ENCODE measurements at regions of chr17 and their contacts with region 1.

Region 1: DNA sequence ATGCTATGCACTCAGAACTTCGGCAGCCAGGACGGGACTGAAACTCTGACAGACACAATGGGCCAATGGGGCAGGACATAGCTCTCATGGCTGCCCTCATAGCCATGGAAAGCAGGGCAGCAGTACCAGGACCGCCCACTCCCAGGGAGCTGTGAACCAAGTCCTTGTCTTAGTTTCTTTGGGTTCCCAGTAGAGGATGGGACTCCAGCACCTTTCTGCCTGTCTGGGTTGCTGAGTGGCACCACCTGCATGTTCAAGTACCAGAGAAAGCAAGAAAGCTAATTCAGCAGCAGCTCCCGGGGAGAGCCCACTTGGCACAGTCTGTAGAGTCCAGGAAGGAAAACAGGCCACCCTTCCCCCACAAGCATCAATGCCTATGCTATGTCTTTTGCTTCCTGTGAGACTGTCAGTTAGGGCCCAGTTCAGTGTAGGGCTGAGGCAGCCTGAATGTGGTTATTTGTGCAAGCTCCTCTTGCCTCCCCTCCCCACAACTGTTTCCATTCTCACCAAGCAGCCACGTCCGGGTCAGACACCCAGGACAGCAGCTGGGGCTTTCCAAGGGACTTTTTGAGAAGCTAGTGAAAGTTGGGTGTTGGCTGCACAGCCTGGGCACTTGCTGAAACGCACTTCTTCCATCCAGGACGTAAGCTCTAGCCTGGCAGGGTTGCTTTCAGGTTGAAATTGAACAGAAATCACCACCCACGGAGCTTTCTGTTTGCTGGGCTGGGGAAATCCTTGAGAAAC is 7.8 kb downstream of the SUPT4H1 start:
- DNase-seq: peak; percentile 92
- H3K4me3 Mint-ChIP-seq: peak overlapping the region; percentile 98
- H3K27ac Mint-ChIP-seq: peak overlapping the region; percentile 100
- H3K4me1 Mint-ChIP-seq: peaks cover 85% of the 10 kb centered on the region
- H3K27me3 Mint-ChIP-seq: no peaks in the 10 kb centered on the region

Region 2: GRCh38 chr17:58303971-58304725 is 40.1 kb before region 1 on chr17:
- CTCF ChIA-PET with region 1: interaction called, 16 read pairs
- POLR2A ChIA-PET with region 1: interaction called, 1,460 read pairs
- DNase-seq: peak; percentile 69
- H3K4me3 Mint-ChIP-seq: no peak overlapping the region
- H3K27ac Mint-ChIP-seq: no peak overlapping the region
- H3K4me1 Mint-ChIP-seq: no peaks in the 10 kb centered on the region
- H3K27me3 Mint-ChIP-seq: peaks cover 4% of the 10 kb centered on the region

Region 3: GRCh38 chr17:58329035-58329809 is 15.0 kb before region 1 on chr17:
- CTCF ChIA-PET with region 1: interaction called, 41 read pairs
- POLR2A ChIA-PET with region 1: interaction called, 1,460 read pairs
- DNase-seq: peak; percentile 85
- H3K4me3 Mint-ChIP-seq: peak overlapping the region; percentile 98
- H3K27ac Mint-ChIP-seq: peak overlapping the region; percentile 99
- H3K4me1 Mint-ChIP-seq: peaks cover 37% of the 10 kb centered on the region
- H3K27me3 Mint-ChIP-seq: peaks cover 2% of the 10 kb centered on the region

Region 4: DNA sequence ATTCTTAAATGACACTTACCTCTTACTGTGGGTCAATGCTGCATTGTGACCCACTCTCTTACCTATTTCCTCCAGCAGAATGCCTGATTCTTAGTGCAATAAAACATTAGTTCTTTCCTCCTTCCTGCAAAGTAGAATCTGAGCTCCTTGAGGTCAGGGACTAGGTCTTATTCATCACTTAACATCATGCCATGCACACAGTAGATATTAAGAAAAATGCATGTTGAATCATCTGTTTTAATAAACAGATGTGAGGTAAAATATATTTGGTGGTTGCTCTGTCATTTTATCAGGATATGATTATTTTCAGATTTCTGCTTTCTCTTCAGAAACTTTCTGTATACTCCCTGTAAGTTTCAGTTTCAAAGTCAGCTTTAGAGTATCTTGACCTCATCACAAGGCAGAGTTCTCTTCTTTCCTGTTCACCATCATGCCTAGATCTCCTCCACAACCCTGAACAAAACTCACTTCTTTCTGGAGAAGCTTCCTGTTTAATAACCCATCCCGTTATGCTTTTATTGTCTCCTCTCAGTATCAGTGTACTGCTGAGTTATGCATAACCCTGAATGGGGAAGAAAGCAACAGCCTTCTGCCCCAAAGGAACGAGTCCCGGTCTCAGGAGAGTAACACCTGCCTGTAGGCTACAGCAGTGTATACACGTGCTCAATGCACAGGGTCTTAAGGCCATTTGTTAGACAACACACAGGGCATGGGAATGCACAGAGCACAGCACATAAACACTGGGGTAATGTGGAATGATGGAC is 38.1 kb after region 1 on chr17:
- CTCF ChIA-PET with region 1: no interaction called
- POLR2A ChIA-PET with region 1: interaction called, 16 read pairs
- DNase-seq: no peak
- H3K4me3 Mint-ChIP-seq: no peak overlapping the region
- H3K27ac Mint-ChIP-seq: peak overlapping the region; percentile 53
- H3K4me1 Mint-ChIP-seq: peaks cover 36% of the 10 kb centered on the region
- H3K27me3 Mint-ChIP-seq: no peaks in the 10 kb centered on the region